Adrenal gland (tissue), 19 donors: ENCODE measurements at regions of chr11 and their contacts with region 1.

Region 1: GRCh38 chr11:66694732-66695207 is 17.1 kb upstream of the RBM4B start:
- DNase-seq: peak; percentile 91 to 98 (median 97)
- H3K4me3 ChIP-seq: no peak overlapping the region
- H3K27ac ChIP-seq: peak overlapping the region in 2 of 5 donors; percentile 4 to 47
- H3K4me1 ChIP-seq: peaks cover 3 to 10% of the 10 kb centered on the region in 2 donors
- H3K27me3 ChIP-seq: no peaks in the 10 kb centered on the region
- CTCF ChIP-seq: peak; percentile 87 to 99 (median 98)
- POLR2A ChIP-seq: no peak

Region 2: GRCh38 chr11:66762088-66762487 is 67.3 kb after region 1 on chr11:
- intact Hi-C with region 1: no loop called
- DNase-seq: no peak
- H3K4me3 ChIP-seq: no peak overlapping the region
- H3K27ac ChIP-seq: no peak overlapping the region
- H3K4me1 ChIP-seq: no peaks in the 10 kb centered on the region
- H3K27me3 ChIP-seq: no peaks in the 10 kb centered on the region
- CTCF ChIP-seq: no peak
- POLR2A ChIP-seq: no peak

Region 3: DNA sequence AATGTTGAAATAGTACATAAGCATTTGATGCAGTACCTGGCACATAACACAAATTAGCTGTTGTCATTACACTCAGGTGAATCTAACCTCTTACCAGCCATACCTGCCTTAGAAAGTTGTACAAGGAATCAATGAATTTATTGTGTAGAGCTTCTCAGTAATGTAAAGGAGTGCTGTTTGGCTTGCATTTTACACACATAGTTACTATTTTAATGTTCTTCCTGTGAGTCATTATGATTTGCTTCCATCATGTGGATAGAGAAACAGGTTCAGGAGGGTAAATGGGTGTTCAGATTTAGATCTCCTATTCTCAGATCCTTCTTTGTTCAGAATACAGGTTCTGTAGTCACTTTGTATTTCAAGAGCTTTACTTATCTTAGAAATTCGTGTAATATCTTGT is 120.9 kb after region 1 on chr11:
- intact Hi-C with region 1: loop called in 1 of 2 experiments (anchors 5 kb)
- DNase-seq: no peak
- H3K4me3 ChIP-seq: no peak overlapping the region
- H3K27ac ChIP-seq: no peak overlapping the region
- H3K4me1 ChIP-seq: no peaks in the 10 kb centered on the region
- H3K27me3 ChIP-seq: no peaks in the 10 kb centered on the region
- CTCF ChIP-seq: no peak
- POLR2A ChIP-seq: no peak

Region 4: DNA sequence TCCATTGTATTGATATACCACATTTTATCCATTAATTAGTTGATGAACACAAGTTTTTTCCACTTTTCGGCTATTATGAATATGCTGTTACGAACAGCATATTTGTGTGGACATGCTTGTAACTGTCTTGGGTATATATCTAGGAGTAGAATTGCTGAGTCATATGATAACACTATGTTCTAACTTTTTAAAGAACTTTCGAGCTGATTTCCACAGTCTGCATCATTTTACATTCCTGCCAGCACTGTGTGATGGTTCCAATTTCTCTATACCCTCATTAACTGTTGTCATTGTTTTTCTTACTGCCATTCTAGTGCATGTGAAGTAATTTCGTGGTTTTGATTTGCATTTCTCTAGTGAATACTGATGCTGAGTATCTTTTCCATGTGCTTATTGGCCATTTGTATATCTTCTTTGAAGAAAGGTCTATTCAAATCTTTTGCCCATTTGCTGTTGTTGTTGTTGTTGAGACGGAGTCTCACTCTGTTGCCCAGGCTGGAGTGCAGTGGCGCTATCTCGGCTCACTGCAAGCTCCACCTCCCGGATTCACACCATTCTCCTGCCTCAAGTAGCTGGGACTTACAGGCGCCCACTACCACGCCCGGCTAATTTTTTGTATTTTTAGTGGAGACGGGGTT is 141.1 kb after region 1 on chr11:
- intact Hi-C with region 1: loop called (anchors 2 to 5 kb)
- DNase-seq: no peak
- H3K4me3 ChIP-seq: no peak overlapping the region
- H3K27ac ChIP-seq: peak overlapping the region in 2 of 5 donors; percentile 29 to 76
- H3K4me1 ChIP-seq: peaks cover 19 to 35% of the 10 kb centered on the region in 2 donors
- H3K27me3 ChIP-seq: no peaks in the 10 kb centered on the region
- CTCF ChIP-seq: no peak
- POLR2A ChIP-seq: no peak

Region 5: GRCh38 chr11:66976048-66976467 is 281.3 kb after region 1 on chr11:
- intact Hi-C with region 1: loop called in 1 of 2 experiments (anchors 10 kb)
- DNase-seq: no peak
- H3K4me3 ChIP-seq: no peak overlapping the region
- H3K27ac ChIP-seq: no peak overlapping the region
- H3K4me1 ChIP-seq: peaks cover 5 to 15% of the 10 kb centered on the region in 2 donors
- H3K27me3 ChIP-seq: no peaks in the 10 kb centered on the region
- CTCF ChIP-seq: peak; percentile 21 to 59 (median 54)
- POLR2A ChIP-seq: no peak